PC-9 (cell line): ENCODE measurements at regions of chr7 and their contacts with region 1.

Region 1: GRCh38 chr7:66033471-66034385 is 41.9 kb upstream of the ASL start:
- DNase-seq: no peak
- H3K4me3 ChIP-seq: no peak overlapping the region
- H3K27ac ChIP-seq: no peak overlapping the region
- H3K4me1 ChIP-seq: no peaks in the 10 kb centered on the region
- H3K27me3 ChIP-seq: no peaks in the 10 kb centered on the region
- CTCF ChIP-seq: no peak

Region 2: GRCh38 chr7:66050990-66051424 is 17.3 kb after region 1 on chr7:
- CTCF ChIA-PET with region 1: interaction called, 8 read pairs
- POLR2A ChIA-PET with region 1: interaction called, 12 read pairs
- intact Hi-C with region 1: no loop called
- DNase-seq: peak; percentile 88 to 99
- H3K4me3 ChIP-seq: no peak overlapping the region
- H3K27ac ChIP-seq: peak overlapping the region; percentile 75
- H3K4me1 ChIP-seq: peaks cover 20% of the 10 kb centered on the region
- H3K27me3 ChIP-seq: no peaks in the 10 kb centered on the region
- CTCF ChIP-seq: no peak

Region 3: DNA sequence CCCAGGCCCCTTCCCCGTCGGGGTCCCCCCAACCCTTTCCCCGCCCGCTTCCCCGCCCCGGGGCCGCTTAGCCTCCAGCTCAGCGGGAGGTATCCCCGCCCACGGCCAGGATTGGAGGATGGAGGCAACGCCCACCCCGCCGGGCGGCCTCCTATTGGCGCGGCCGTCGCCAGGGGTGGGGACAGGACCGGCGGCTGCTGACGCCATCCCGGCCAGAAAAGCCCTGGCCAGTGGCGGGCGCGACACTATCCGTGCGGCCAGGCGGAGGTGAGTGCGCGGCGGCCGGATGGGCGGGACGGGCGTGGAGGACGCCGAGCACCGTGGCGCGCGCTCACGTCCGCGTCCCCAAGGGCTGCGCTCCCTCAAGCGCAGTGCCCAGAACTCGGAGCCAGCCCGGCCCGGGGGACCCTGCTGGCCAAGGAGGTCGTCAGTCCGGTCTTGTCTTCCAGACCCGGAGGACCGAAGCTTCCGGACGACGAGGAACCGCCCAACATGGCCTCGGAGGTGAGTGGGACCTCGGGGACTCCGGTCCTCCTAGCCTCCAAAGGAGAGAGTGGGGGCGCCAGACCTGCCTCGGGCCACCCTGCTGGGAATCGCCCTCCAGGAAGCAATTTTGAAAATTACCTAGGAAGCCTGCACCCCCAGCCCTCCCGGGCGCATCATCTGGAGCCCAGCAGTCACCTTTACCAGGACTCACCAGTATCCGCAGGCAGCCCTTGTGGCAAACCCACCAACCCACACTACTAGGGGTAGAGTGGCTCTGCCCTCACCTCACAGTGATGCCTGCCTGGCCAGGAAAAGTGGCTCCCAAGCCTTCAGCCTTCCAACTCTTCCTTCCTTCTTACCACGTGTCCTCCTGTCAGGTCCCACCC is 42.1 kb after region 1 on chr7 and contains the start of gene ASL:
- CTCF ChIA-PET with region 1: interaction called, 20 read pairs
- POLR2A ChIA-PET with region 1: no interaction called
- intact Hi-C with region 1: no loop called
- DNase-seq: peak; percentile 80 to 96
- H3K4me3 ChIP-seq: peak within 1 kb of the TSS; percentile 84
- H3K27ac ChIP-seq: no peak within 1 kb of the TSS
- H3K4me1 ChIP-seq: peaks cover 9% of the 10 kb centered on the region
- H3K27me3 ChIP-seq: no peaks in the 10 kb centered on the region
- CTCF ChIP-seq: no peak
- total RNA-seq, gene ASL: 19.0 and 30.5 TPM in 2 replicates

Region 4: DNA sequence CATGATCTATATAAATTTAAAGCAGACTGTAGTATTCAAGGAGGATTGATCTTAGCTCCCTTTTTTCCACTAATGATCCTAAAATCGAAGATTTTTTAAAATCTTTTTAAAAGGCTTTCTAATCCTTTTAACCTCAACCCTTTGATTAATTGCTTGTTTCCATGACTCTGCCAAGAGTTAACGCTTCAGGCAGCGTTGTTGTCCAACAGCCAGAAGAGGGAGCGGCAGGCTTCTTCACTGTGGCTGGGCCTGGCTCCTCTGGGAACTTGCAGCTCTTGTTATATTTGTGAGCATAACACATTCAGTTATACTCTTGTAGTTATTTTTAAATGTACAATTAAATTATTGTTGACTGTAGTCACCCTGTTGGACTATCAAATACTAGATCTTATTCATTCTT is 107.2 kb after region 1 on chr7:
- CTCF ChIA-PET with region 1: no interaction called
- POLR2A ChIA-PET with region 1: no interaction called
- intact Hi-C with region 1: loop called (anchors 10 kb)
- DNase-seq: peak in 1 of 2 experiments; percentile 15
- H3K4me3 ChIP-seq: no peak overlapping the region
- H3K27ac ChIP-seq: no peak overlapping the region
- H3K4me1 ChIP-seq: peaks cover 16% of the 10 kb centered on the region
- H3K27me3 ChIP-seq: no peaks in the 10 kb centered on the region
- CTCF ChIP-seq: no peak; the same call in 1 of the 2 replicates

Region 5: DNA sequence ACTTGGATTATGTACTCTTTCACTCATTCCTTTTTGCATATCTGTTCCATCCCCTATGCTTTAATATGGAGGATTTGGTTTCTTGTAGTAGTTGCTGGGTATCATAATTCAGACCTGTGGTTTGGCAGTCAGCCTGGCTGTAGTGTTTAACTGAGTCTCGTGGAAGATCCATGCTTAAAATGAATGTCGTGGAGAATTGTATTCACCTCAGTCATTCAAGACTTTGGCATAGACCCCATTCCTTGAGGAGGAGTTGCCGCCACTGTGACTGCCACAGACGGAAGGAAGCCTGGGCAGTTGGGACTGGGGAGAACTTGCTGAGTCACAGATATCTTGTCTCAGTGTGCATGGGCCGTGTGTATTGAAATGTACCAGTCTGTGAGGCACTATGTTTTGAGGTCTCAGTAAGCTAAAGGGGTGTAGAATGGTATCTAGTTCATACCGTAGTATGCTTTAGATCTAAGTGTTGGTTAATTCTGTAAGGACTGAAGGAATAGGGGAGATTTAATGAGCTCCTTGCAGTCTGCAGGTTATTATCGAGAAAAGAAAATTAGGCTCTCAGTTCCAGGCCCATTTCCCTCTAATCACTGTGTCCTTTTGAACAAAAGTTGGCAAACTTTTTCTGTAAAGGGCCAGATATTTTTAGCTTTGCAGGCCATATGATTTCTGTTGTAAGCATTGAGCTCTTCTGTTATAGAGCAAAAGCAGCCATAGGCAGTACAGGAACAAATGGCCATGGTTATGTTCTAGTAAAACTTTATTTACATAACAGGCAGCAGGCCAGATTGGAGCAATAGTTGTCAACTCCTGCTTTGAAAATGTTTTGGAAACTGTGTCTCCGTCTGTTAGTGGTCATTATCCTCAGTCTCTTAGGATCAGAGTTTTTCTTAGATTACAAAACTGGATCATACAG is 248.2 kb after region 1 on chr7:
- CTCF ChIA-PET with region 1: no interaction called
- POLR2A ChIA-PET with region 1: no interaction called
- intact Hi-C with region 1: no loop called
- DNase-seq: peak in 1 of 2 experiments; percentile 51
- H3K4me3 ChIP-seq: no peak overlapping the region
- H3K27ac ChIP-seq: no peak overlapping the region
- H3K4me1 ChIP-seq: peaks cover 15% of the 10 kb centered on the region
- H3K27me3 ChIP-seq: no peaks in the 10 kb centered on the region
- CTCF ChIP-seq: no peak

Region 6: DNA sequence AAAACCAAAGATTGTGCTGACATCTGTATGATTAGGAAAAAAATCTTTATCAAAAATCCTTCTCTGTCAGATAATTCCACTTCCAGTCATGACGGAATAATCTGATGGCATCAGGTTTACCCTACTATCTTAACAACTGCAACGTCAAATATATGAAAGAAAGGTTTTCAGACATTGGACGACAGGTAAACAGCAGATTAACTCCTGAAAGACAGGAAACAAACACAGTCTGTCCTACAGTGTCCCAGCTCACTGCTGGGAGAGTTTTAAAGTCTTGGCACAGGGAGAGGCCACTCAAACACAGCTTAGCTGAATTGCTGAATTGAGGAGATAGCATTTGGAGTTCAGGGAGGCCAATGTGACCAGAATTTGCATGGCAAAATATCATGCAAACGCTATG is 408.7 kb after region 1 on chr7:
- CTCF ChIA-PET with region 1: interaction called, 15 read pairs
- POLR2A ChIA-PET with region 1: no interaction called
- intact Hi-C with region 1: no loop called
- DNase-seq: no peak
- H3K4me3 ChIP-seq: no peak overlapping the region
- H3K27ac ChIP-seq: no peak overlapping the region
- H3K4me1 ChIP-seq: no peaks in the 10 kb centered on the region
- H3K27me3 ChIP-seq: no peaks in the 10 kb centered on the region
- CTCF ChIP-seq: no peak

Region 7: DNA sequence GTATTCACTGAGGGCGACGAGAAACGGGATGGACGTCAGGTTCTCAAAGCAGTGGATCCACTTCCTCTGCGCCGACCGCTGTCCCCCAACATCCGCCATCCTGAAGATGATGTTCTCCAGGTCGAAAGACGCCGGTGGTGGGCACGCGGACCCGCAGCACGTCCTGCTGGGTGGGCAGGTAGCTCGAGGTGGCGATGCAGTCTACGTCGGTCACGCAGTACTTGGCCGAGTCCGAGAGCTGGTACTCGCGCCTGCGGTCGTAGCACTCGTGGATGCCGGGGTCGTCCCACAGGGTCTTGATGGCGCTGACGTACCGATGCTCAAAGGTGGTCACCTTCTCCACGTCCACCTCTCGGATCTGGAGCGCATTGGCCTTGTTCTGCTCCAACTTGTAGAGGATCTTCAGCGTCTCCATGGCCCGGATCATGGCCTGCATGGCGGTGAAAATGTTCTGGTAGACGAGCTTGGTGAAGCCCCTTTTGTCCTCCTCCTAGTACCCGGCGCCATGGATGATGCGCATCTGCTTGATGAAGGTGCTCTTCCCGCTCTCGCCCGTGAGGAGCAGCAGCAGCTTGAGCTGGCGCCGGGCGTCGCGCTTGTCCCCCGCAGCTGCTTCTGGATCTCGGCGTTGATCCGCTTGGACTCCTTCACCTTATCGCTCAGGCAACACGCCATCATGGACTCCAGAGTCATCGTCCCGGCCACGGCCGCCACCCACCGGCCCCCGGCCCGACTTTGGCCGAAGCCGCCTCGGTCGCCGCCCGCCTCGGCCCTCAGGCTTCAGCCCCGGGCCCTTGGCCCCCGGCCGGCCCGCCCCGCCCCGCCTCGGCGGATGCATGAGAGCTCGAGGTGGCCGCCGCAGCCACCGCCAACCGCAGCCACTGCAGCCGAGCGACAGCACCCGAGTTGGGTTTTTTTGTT is 472.1 kb after region 1 on chr7:
- CTCF ChIA-PET with region 1: interaction called, 3 read pairs
- POLR2A ChIA-PET with region 1: interaction called, 11 read pairs
- intact Hi-C with region 1: no loop called
- DNase-seq: peak in 1 of 2 experiments; percentile 28
- H3K4me3 ChIP-seq: no peak overlapping the region
- H3K27ac ChIP-seq: no peak overlapping the region
- H3K4me1 ChIP-seq: no peaks in the 10 kb centered on the region
- H3K27me3 ChIP-seq: no peaks in the 10 kb centered on the region
- CTCF ChIP-seq: no peak

Region 8: DNA sequence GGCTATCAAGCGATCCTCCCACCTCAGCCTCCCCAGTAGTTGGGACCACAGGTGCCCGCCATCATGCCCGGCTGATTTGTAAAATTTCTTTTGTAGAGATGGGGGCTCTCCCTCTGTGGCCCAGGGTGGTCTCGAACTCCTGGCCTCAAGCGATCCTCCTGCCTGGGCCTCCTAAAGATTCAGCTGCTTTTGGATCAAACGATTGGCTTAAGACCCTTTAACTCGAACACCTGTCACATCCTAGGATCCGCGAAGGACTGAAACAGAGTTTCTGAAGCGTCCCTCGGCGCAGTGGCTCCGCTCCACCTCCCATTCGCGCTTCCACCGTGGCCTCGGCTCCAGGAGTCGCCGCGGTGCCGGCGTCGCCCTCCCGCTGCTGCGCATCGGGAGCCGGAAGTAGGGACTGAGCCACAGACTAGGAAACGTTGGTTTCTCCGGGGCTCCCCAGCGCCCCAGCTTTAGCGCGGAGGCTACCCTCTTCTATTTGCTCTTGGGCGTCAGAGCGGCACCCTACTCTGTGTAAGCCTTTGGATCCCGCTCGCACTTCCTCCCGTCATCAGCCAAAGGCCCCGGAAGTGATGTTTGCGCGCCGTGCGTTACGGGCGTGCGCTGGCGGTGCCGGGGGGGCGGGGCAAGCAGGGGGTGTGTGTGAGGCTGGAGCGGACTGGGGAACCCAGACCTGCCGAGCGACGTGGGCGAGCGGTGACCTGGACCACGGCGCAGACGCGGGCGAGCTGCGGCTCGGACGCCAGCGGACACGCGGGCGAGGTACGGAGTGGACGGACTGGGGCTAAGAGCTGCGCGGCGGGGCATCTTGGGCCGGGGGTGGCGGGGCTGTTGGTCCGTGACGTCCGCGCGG is 648.0 kb after region 1 on chr7:
- CTCF ChIA-PET with region 1: interaction called, 11 read pairs
- POLR2A ChIA-PET with region 1: no interaction called
- intact Hi-C with region 1: no loop called
- DNase-seq: peak; percentile 91 to 96
- H3K4me3 ChIP-seq: peak overlapping the region; percentile 89
- H3K27ac ChIP-seq: peak overlapping the region; percentile 77
- H3K4me1 ChIP-seq: peaks cover 11% of the 10 kb centered on the region
- H3K27me3 ChIP-seq: no peaks in the 10 kb centered on the region
- CTCF ChIP-seq: no peak